ENCODE measurements at regions of chr14 and their contacts with region 1.

Region 1: DNA sequence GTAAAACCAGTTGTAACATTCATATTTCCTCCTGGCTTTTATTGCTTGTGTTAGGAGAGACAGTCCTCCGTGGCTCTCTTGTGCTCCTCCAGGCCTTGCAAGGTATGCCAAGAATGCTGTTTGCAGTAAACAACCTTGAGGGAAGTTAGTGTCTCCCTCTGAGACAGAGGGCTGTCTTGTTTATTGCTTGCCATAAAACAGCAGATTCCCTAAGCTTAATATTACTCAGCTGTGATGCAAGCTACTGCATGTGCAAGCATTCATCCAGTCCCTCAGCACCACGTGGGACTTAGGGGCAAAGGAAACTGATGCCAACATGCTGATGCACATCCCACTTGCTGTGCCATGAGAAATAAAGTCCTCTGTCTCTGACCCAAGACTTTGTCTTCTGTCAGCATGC is 6.6 kb downstream of the POMT2 start:
- DNase-seq: peak; percentile 55
- H3K4me3 ChIP-seq: no peak overlapping the region
- H3K27ac ChIP-seq: peak overlapping the region; percentile 61 to 64
- H3K4me1 ChIP-seq: peaks cover 20% of the 10 kb centered on the region
- H3K27me3 ChIP-seq: no peaks in the 10 kb centered on the region
- CTCF ChIP-seq: no peak
- POLR2A ChIP-seq: no peak

Region 2: DNA sequence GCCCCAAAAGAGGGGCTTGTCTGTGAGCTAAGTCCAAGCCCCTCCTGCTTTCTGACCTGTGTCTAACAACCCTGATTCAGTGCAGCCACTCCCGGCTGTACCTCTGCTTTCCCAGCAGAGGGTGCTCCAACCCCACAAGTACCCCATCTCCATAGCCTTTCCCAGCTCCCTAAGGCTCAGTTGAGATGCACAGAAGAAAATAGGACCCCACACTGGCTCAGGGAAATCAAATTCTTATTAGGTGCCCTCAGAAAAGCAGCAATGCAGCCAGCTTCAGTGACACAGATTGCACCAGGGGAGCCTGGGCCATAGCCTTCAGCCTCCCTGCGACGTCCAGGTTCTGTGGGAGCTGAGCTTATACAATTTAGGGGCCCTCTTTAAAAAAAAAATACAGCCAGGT is 438.0 kb before region 1 on chr14:
- intact Hi-C with region 1: loop called (anchors 10 kb)
- DNase-seq: peak; percentile 56
- H3K4me3 ChIP-seq: no peak overlapping the region
- H3K27ac ChIP-seq: no peak overlapping the region
- H3K4me1 ChIP-seq: no peaks in the 10 kb centered on the region
- H3K27me3 ChIP-seq: no peaks in the 10 kb centered on the region
- CTCF ChIP-seq: peak; percentile 81 to 96 (median 90)
- POLR2A ChIP-seq: no peak

Region 3: GRCh38 chr14:77158175-77158891 is 155.7 kb before region 1 on chr14:
- intact Hi-C with region 1: loop called (anchors 2 kb)
- DNase-seq: no peak
- H3K4me3 ChIP-seq: no peak overlapping the region
- H3K27ac ChIP-seq: no peak overlapping the region
- H3K4me1 ChIP-seq: no peaks in the 10 kb centered on the region
- H3K27me3 ChIP-seq: peaks cover 2% of the 10 kb centered on the region
- CTCF ChIP-seq: no peak
- POLR2A ChIP-seq: no peak

Region 4: DNA sequence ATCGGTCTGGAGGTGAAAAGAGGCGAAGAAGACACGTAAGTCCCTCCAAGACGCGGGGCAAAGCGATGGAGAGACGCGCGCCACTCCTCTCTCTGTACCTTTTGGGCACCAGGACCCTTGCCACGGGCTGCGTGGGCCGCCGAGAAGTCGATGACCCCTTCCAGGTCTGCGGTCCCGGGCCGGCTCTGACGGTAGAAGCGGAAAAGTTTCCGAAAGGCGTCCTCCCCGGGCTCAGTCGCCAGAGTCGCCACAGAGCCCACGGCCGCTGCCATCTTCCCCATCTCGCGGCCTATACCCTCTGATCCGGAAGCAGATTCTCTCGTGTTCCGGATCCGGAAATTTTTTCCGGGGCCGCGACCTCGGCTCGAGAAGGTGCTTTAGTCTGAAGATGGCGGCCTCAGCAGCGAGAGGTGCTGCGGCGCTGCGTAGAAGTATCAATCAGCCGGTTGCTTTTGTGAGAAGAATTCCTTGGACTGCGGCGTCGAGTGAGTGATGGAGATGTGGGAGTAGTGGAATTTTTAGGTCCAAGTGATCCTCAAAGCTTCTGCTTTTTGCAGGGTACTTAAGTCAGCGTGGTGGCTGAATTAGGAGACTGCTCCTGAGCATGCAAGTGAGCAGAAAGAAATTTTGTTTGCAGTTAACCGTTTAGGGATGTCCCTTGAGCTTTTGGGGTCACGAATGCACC is 393.8 kb after region 1 on chr14 and contains the starts of genes ALKBH1 and SLIRP:
- intact Hi-C with region 1: loop called (anchors 10 kb)
- DNase-seq: peak; percentile 79
- H3K4me3 ChIP-seq: peak within 1 kb of the TSS; percentile 74 to 96
- H3K27ac ChIP-seq: peak within 1 kb of the TSS; percentile 67 to 74
- H3K4me1 ChIP-seq: no peaks in the 10 kb centered on the region
- H3K27me3 ChIP-seq: no peaks in the 10 kb centered on the region
- CTCF ChIP-seq: no peak
- POLR2A ChIP-seq: peak; percentile 26
- total RNA-seq, gene ALKBH1: 12.5 to 20.4 TPM
- total RNA-seq, gene SLIRP: 126 to 341 TPM